Activated T-helper 2 cell treated with anti-CD3 and anti-CD28 coated beads, Interferon-gamma antibody, Interleukin-2, Interleukin-4, amounts not matched to agents 10 μg/mL and 5 μg/mL and 100 μg/mL, durations not matched to agents 14 hours and 24 hours and 36 hours (primary cell): ENCODE measurements at regions of chr13 and their contacts with region 1.

Region 1: DNA sequence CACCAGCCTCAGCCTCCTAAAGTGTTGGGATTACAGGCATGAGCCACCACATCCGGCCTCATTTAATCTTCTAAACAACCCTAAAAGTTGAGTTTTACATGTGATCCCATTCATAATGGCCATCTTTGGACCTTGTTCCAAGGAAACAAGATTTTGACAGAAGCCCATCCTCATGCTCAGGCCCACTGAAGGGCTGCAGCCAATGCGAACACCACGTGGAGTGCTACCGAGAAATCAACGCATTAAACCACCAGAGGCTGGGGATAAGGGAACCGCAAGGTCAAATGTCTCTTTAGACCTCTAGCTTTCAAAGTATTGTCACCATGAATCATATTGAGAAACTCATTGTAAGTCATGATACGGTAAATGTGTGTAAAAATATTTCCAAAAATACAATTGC is 49.4 kb upstream of the DOCK9 start:
- DNase-seq: no peak
- H3K4me3 Mint-ChIP-seq: peak overlapping the region; percentile 48
- H3K27ac Mint-ChIP-seq: peak overlapping the region; percentile 89
- H3K4me1 Mint-ChIP-seq: peaks cover 75% of the 10 kb centered on the region
- H3K27me3 Mint-ChIP-seq: no peaks in the 10 kb centered on the region

Region 2: DNA sequence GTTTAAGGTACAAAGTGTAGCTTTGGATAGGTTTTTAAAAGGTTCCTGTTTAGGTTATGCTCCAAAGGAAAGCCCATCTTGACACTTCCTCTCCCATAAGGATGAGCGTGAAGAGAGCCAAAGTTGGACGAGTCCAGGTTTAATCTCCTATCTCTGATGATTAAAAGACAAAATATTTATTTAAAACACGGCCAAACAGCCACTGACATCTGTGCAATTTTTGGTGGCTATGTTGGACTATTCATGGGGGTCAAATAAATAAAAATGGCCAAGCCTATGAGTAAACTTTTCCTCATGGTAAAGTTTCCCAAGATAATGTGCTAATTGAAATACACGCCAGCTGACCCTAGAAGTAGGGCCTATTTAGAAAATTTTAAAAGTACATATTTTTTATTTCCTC is 19.6 kb after region 1 on chr13:
- intact Hi-C with region 1: loop called (anchors 2 kb)
- DNase-seq: no peak
- H3K4me3 Mint-ChIP-seq: peak overlapping the region; percentile 53
- H3K27ac Mint-ChIP-seq: peak overlapping the region; percentile 82
- H3K4me1 Mint-ChIP-seq: peaks cover 83% of the 10 kb centered on the region
- H3K27me3 Mint-ChIP-seq: no peaks in the 10 kb centered on the region